AG04449 (cell line): ENCODE measurements at regions of chr12 and their contacts with region 1.

Region 1: GRCh38 chr12:107607464-107608392 is 77.9 kb upstream of the PWP1 start:
- DNase-seq: no peak
- H3K4me3 ChIP-seq: no peak overlapping the region
- CTCF ChIP-seq: peak; percentile 89

Region 2: DNA sequence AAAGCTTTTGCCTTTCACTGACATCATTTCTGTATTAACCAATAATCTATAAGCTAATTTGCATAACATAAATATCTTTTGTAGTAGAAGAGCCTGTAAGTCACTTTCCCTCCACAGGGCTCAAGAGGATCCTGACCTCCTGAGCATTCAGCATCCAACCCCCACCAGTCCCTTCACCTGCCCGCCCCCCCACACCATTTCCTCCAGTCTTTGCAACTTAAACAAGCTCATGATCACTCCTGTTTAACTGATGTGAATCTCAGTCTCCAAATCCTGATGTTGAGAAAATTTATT is 502.4 kb before region 1 on chr12:
- CTCF ChIA-PET with region 1: interaction called, 1,069 read pairs
- POLR2A ChIA-PET with region 1: interaction called, 3 read pairs
- DNase-seq: no peak
- H3K4me3 ChIP-seq: no peak overlapping the region
- CTCF ChIP-seq: no peak

Region 3: GRCh38 chr12:107448198-107448597 is 159.5 kb before region 1 on chr12:
- CTCF ChIA-PET with region 1: interaction called, 50 read pairs
- POLR2A ChIA-PET with region 1: no interaction called
- DNase-seq: no peak
- H3K4me3 ChIP-seq: no peak overlapping the region
- CTCF ChIP-seq: peak; percentile 36

Region 4: GRCh38 chr12:107580750-107581618 is 26.7 kb before region 1 on chr12:
- CTCF ChIA-PET with region 1: interaction called, 15 read pairs
- POLR2A ChIA-PET with region 1: no interaction called
- DNase-seq: no peak
- H3K4me3 ChIP-seq: peak overlapping the region; percentile 30
- CTCF ChIP-seq: no peak

Region 5: DNA sequence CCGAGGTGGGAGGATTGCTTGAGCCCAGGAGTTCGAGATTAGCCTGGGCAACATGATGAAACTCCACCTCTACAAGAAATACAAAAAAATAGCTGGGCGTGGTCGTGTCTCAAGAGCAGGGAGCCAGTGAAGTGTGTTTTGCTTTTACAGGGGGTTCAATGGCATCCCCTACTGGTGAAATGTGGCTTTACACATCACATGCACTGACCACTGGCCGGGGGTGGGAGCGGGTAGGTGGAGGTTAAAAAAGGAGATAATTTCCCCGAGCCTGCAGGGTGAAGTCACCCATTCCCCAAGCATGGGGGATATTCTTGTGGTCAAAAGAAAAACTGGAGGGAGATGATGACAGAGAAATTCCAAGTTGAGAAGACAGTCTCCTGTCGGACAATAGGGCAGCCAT is 14.3 kb after region 1 on chr12:
- CTCF ChIA-PET with region 1: interaction called, 141 read pairs
- POLR2A ChIA-PET with region 1: no interaction called
- DNase-seq: no peak
- H3K4me3 ChIP-seq: no peak overlapping the region
- CTCF ChIP-seq: peak; percentile 42

Region 6: DNA sequence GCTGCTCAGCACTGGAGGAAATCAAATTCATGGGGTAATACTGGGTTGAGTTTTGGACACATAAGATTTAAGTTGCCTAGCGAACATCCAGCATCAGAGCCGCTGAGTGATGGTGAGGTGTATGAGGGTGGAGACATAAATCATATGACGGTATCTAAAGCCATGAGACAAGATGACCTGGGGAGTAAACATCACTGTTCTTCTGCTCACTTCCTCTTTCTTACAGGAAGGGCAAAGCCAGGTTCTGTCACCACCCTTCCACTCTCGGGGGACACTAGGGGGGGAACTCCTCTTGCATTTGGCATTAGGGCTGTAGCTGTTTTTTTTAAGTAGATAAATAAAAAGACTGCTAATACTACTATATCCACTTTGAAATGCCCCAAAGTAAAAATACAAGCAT is 129.2 kb after region 1 on chr12:
- CTCF ChIA-PET with region 1: no interaction called
- POLR2A ChIA-PET with region 1: no interaction called
- DNase-seq: no peak
- H3K4me3 ChIP-seq: no peak overlapping the region
- CTCF ChIP-seq: no peak